Transverse colon (tissue), 4 donors: ENCODE measurements at regions of chr1 and their contacts with region 1.

Region 1: GRCh38 chr1:109041621-109042468 is at the start of gene WDR47:
- DNase-seq: peak; percentile 97
- H3K4me3 ChIP-seq: peak within 1 kb of the TSS; percentile 63 to 89 (median 74)
- H3K27ac ChIP-seq: peak within 1 kb of the TSS; percentile 86 to 95 (median 90)
- H3K4me1 ChIP-seq: peaks cover 0 to 17% (median 12%) of the 10 kb centered on the region in 4 donors
- H3K27me3 ChIP-seq: no peaks in the 10 kb centered on the region
- CTCF ChIP-seq: no peak
- EP300 ChIP-seq: no peak
- POLR2A ChIP-seq: peak; percentile 95
- total RNA-seq, gene WDR47: 6.7 to 12.1 (median 9.7) TPM

Region 2: DNA sequence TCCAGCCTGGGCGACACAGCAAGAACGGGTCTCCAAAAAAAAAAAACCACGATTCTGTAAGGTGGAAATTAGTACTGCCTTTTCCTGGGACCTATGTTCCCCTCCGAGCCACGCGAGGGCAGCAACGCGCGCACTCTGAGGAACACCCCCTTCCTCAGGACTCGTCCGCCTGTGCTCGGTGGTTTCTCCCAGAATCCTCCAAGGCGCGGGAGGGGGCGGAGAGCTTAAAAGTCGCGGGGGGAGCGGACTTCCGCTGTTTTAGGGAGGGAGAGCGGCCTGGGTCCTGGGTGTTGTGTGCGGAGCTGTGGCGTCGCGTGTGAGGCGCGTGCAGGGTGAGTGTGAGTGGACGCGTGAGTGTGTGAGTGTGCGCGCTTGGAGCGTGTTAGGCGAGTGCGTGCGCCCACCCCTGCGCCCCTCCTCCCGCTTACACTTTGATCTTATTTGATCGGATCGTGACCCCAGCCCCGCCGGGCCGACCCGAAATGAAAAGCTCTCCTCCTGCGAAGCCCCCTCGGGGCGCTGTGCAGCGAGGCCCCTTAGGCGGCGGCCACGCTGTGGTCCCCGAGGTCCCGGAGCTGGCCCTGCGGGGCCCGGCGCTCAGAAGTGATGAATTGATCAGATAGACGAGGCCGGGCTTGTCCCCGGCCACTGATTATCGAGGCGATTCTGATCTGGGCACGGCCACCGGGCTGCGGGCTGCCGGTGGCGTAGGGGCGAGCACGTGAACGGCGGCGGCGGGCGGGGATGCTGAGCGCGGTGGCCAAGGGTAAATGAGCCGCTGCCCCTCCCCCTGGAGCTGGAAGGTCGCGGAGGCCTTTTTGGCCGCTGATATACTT is 58.3 kb after region 1 on chr1:
- in situ Hi-C with region 1: no loop called
- intact Hi-C with region 1: loop called (anchors 10 kb)
- DNase-seq: peak; percentile 97
- H3K4me3 ChIP-seq: peak overlapping the region; percentile 80 to 97 (median 84)
- H3K27ac ChIP-seq: peak overlapping the region; percentile 95 to 99 (median 97)
- H3K4me1 ChIP-seq: peaks cover 5 to 32% (median 11%) of the 10 kb centered on the region in 4 donors
- H3K27me3 ChIP-seq: no peaks in the 10 kb centered on the region
- CTCF ChIP-seq: peak; percentile 72 to 90 (median 90)
- EP300 ChIP-seq: no peak
- POLR2A ChIP-seq: peak; percentile 99

Region 3: GRCh38 chr1:109584766-109585165 is 542.9 kb after region 1 on chr1:
- in situ Hi-C with region 1: no loop called
- intact Hi-C with region 1: loop called (anchors 5 kb)
- DNase-seq: no peak
- H3K4me3 ChIP-seq: no peak overlapping the region
- H3K27ac ChIP-seq: no peak overlapping the region
- H3K4me1 ChIP-seq: peaks cover 0 to 1% (median 0%) of the 10 kb centered on the region in 4 donors
- H3K27me3 ChIP-seq: no peaks in the 10 kb centered on the region
- CTCF ChIP-seq: no peak
- EP300 ChIP-seq: no peak
- POLR2A ChIP-seq: no peak